Esophagus squamous epithelium (tissue), 5 donors: ENCODE measurements at regions of chr10 and their contacts with region 1.

Region 1: DNA sequence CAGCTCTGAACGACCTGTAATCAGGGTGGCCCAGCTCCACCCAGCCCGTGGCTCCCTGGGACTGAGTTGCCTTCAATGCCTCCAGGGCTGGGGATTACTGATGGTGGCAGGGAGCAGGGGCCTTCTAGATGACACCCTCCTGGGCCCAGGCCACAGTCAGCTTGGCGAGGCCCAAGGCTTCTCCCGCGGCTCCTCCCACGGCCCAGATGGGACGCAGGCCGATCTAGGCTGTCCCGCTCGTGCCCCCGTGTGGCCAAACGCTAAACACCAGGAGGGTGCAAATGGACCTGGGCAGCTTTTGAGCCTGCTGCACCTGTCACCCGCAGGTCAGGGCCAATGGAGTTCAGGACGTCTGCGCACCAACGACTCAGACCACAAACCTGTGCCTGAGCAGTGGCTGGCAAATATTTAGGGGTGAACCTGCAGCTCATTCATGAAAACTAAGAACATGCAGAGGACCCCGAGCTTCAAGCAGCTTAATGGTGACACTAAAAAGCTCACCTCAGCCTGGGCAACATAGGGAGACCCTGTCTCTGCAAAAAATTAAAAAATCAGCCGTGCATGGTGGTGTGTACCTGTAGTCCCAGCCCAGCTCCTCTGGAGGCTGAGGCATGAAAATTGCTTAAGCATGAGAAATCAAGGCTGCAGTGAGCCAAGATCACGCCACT is 43.2 kb downstream of the ASB13 start:
- DNase-seq: peak; percentile 17
- H3K4me3 ChIP-seq: no peak overlapping the region
- H3K27ac ChIP-seq: peak overlapping the region; percentile 49 to 79 (median 61)
- H3K4me1 ChIP-seq: peaks cover 11 to 46% (median 27%) of the 10 kb centered on the region in 3 donors
- H3K27me3 ChIP-seq: no peaks in the 10 kb centered on the region
- CTCF ChIP-seq: peak; percentile 86 to 98 (median 92)
- POLR2A ChIP-seq: no peak

Region 2: DNA sequence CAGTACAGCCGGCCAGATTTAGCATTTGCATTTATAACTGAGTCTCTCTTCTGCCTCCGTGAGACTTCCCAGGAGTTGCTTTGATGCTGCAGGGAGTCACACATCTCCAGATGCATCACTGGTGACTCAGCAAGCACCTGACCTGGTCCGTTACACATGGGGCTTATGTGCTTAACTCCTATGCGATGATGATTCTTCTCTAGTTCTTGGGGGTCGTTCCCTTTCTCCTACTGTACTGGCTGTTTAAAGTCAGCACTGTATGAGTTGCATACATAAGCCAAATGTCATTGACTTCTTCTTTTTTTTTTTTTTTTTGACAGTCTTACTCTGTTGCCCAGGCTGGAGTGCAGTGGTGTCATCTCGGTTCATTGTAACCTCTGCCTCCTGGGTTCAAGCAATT is 810.2 kb before region 1 on chr10:
- intact Hi-C with region 1: loop called (anchors 10 kb)
- DNase-seq: no peak
- H3K4me3 ChIP-seq: no peak overlapping the region
- H3K27ac ChIP-seq: no peak overlapping the region
- H3K4me1 ChIP-seq: peaks cover 0 to 7% (median 0%) of the 10 kb centered on the region in 3 donors
- H3K27me3 ChIP-seq: no peaks in the 10 kb centered on the region
- CTCF ChIP-seq: no peak
- POLR2A ChIP-seq: no peak

Region 3: GRCh38 chr10:5442065-5442989 is 180.9 kb before region 1 on chr10:
- intact Hi-C with region 1: loop called (anchors 5 kb)
- DNase-seq: no peak
- H3K4me3 ChIP-seq: no peak overlapping the region
- H3K27ac ChIP-seq: peak overlapping the region in 1 of 4 donors; percentile 12
- H3K4me1 ChIP-seq: peaks cover 0 to 23% (median 4%) of the 10 kb centered on the region in 3 donors
- H3K27me3 ChIP-seq: no peaks in the 10 kb centered on the region
- CTCF ChIP-seq: peak; percentile 58 to 87 (median 73)
- POLR2A ChIP-seq: no peak

Region 4: DNA sequence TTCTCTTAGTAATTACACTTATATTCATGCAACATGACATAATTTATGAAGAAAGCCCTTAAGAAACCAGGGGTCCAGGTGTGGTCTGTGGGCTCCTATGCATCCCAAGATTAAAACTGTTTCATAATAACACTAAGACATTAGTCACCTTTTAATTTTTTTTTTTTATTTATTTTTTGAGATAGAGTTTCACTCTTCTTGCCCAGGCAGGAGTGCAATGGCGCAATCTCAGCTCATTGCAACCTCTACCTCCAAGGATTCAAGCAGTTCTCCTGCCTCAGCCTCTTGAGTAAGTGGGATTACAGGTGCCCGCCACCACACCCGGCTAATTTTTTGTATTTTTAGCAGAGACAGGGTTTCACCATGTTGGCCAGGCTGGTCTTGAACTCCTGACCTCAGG is 177.6 kb after region 1 on chr10:
- intact Hi-C with region 1: no loop called
- DNase-seq: no peak
- H3K4me3 ChIP-seq: no peak overlapping the region
- H3K27ac ChIP-seq: no peak overlapping the region
- H3K4me1 ChIP-seq: peaks cover 0 to 27% (median 0%) of the 10 kb centered on the region in 3 donors
- H3K27me3 ChIP-seq: no peaks in the 10 kb centered on the region
- CTCF ChIP-seq: no peak
- POLR2A ChIP-seq: no peak